Activated CD4-positive, alpha-beta memory T cell treated with anti-CD3 and anti-CD28 coated beads, Interleukin-2, amount 10 ng/mL, durations not matched to agents 7 days and 5 days (primary cell): ENCODE measurements at regions of chr17 and their contacts with region 1.

Region 1: DNA sequence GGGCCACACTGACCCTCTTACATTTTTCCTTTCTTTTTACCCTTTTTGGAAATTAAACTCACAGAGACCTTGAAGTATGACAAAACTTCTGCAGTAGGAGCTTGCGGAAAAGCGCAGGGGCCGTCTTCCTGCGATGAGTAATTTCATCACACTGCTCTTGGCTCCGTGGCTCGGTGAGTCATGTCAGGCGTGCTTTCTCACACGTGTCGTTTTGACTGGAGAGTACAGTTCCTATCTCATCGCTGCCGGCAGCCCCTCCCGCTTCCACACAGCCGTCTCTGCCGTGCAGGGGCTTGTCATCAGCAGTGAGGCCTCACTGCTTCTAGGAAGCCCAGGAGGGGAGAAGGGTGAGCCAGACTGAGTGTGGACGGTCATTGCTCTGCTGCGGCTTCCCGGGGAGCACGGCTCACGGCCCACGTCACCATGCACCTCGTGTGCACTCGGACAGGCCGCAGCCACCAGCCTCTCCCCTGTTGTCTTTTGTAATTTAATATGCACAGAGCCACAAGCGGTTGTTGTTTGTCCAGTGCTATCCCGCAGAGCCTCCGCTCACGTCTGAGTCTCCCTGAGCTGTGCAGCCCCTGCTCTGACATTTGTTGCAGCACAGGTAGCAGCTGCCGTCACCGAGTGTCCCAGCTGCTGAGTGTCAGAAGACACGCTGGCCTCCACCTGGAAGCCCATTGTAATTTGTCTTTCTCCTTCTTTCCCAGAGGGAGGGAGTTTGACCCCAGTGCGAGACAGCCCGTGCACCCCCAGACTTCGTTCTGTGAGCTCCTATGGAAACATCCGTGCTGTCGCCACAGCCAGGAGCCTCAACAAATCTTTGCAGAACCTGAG is 99.4 kb upstream of the CHMP6 start:
- DNase-seq: peak; percentile 95
- H3K4me3 Mint-ChIP-seq: peak overlapping the region; percentile 94
- H3K27ac Mint-ChIP-seq: peak overlapping the region; percentile 100
- H3K4me1 Mint-ChIP-seq: peaks cover 85% of the 10 kb centered on the region
- H3K27me3 Mint-ChIP-seq: no peaks in the 10 kb centered on the region

Region 2: DNA sequence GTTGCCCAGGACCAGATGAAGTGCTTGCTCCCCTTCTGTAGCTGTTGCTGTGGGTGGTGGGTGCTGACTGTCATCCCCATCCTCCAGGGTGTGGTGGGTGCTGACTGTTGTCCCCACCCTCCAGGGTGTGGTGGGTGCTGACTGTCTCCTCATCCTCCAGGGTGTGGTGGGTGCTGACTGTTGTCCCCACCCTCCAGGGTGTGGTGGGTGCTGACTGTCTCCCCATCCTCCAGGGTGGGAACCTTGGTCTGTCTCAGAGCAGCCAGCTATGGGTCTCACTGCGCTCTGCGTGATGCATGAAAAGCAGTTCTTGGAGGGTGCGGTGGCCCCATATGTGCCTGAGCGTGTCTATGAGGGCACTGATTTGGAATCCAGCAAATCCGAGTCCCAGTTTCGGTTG is 183.8 kb before region 1 on chr17:
- CTCF ChIA-PET with region 1: no interaction called
- POLR2A ChIA-PET with region 1: interaction called, 12 read pairs
- DNase-seq: peak; percentile 45
- H3K4me3 Mint-ChIP-seq: peak overlapping the region; percentile 57
- H3K27ac Mint-ChIP-seq: peak overlapping the region; percentile 93
- H3K4me1 Mint-ChIP-seq: peaks cover 94% of the 10 kb centered on the region
- H3K27me3 Mint-ChIP-seq: no peaks in the 10 kb centered on the region

Region 3: GRCh38 chr17:80791758-80792284 is 100.4 kb before region 1 on chr17:
- CTCF ChIA-PET with region 1: no interaction called
- POLR2A ChIA-PET with region 1: interaction called, 19 read pairs
- DNase-seq: peak; percentile 66
- H3K4me3 Mint-ChIP-seq: peak overlapping the region; percentile 74
- H3K27ac Mint-ChIP-seq: peak overlapping the region; percentile 97
- H3K4me1 Mint-ChIP-seq: peaks cover 80% of the 10 kb centered on the region
- H3K27me3 Mint-ChIP-seq: no peaks in the 10 kb centered on the region

Region 4: DNA sequence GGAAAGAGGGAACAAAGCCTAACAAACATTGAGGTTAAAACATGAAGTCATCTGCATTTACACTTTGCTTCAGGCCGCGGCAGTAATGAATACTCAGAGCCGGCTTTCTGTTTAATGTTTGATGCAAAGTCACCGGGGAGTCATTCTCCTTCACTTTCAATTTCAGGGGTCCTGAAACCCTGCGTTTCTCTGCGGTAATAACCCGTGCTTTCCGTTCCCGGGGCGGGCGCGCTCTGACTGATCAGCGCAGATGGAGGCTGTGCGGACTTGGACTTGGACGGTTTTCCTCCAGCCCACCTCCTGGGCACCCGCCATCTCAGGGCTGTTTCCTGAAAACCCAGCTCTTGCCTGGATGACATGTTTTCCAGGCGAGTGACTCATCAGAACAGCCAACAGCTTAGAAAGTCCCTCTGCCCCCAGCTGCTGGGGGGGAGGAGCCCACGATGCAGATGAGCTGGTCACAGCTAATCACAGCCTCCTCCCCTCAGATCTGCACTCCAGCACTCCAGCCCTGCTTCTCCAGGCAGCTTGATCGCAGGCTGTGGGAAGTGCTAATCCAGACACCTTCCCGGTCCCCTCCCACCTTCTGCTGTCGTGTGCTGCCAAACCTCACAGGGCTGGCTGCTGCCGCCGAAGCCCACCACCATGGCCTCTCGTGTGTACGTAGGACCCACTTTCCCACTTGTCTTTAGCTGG is 59.2 kb before region 1 on chr17:
- CTCF ChIA-PET with region 1: interaction called, 14 read pairs
- POLR2A ChIA-PET with region 1: interaction called, 26 read pairs
- DNase-seq: peak; percentile 84
- H3K4me3 Mint-ChIP-seq: peak overlapping the region; percentile 72
- H3K27ac Mint-ChIP-seq: peak overlapping the region; percentile 90
- H3K4me1 Mint-ChIP-seq: peaks cover 66% of the 10 kb centered on the region
- H3K27me3 Mint-ChIP-seq: no peaks in the 10 kb centered on the region

Region 5: GRCh38 chr17:80866147-80866793 is 26.0 kb before region 1 on chr17:
- CTCF ChIA-PET with region 1: interaction called, 5 read pairs
- POLR2A ChIA-PET with region 1: interaction called, 135 read pairs
- DNase-seq: peak; percentile 80
- H3K4me3 Mint-ChIP-seq: no peak overlapping the region
- H3K27ac Mint-ChIP-seq: peak overlapping the region; percentile 61
- H3K4me1 Mint-ChIP-seq: peaks cover 78% of the 10 kb centered on the region
- H3K27me3 Mint-ChIP-seq: no peaks in the 10 kb centered on the region

Region 6: GRCh38 chr17:81302861-81303333 is 410.7 kb after region 1 on chr17:
- CTCF ChIA-PET with region 1: no interaction called
- POLR2A ChIA-PET with region 1: no interaction called
- DNase-seq: no peak
- H3K4me3 Mint-ChIP-seq: no peak overlapping the region
- H3K27ac Mint-ChIP-seq: no peak overlapping the region
- H3K4me1 Mint-ChIP-seq: no peaks in the 10 kb centered on the region
- H3K27me3 Mint-ChIP-seq: no peaks in the 10 kb centered on the region